ENCODE measurements at regions of chrX and their contacts with region 1.

Region 1: GRCh38 chrX:148530464-148531077 is 30.2 kb downstream of the AFF2 start:
- DNase-seq: no peak
- ATAC-seq: no peak; the same call in 2 of the 3 replicates
- H3K4me3 ChIP-seq: no peak overlapping the region
- H3K27ac ChIP-seq: no peak overlapping the region
- H3K4me1 ChIP-seq: no peaks in the 10 kb centered on the region
- H3K27me3 ChIP-seq: no peaks in the 10 kb centered on the region
- CTCF ChIP-seq: peak; percentile 47 to 74 (median 58); a peak in 5 of 6 replicates
- EP300 ChIP-seq: no peak
- POLR2A ChIP-seq: no peak
- RAD21 ChIP-seq: peak; percentile 43

Region 2: DNA sequence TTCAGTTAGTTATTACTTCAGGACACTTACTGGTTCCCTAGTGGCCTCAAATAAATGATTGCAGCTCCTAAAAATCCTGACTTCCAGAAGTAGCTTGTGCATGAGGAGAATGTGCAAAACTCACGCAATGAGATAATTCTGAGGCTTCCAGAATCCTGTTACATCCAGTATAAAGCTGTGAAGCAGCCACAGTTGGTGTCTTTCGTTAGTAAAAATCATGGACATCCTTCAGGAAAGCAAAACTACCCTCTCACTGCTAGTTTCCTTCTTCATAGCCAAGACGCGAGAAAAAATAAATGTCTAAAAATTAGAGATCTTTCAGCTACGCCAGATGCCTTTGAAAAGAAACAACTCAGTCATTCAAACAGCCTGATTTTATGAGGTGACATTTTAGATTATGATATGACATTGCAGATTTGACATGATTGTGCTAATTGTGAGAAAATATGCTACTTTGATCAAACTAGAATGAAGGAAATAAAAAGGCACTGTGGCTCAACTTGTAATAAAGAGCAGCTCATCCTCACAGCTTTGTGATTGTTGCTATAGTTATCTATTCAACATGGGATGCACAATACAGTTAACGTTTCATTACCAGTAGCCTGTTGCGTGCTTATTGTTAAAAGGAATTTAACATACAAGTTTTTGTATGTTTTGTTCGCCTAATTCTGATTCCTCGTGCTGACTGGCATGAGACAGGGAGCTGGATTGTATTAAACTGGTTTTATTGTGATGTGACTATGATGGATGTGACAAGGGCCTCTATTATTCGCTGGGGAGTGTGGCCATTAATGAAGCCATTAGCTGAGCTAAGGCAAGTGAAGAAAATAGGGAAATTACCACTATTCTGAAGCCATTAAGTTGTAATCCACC is 10.3 kb after region 1 on chrX:
- CTCF ChIA-PET with region 1: interaction called, 21 read pairs
- POLR2A ChIA-PET with region 1: no interaction called
- RAD21 ChIA-PET with region 1: no interaction called
- SMC1A ChIA-PET with region 1: interaction called, 6 read pairs
- in situ Hi-C with region 1: no loop called
- intact Hi-C with region 1: no loop called
- DNase-seq: no peak
- ATAC-seq: no peak
- H3K4me3 ChIP-seq: no peak overlapping the region
- H3K27ac ChIP-seq: no peak overlapping the region
- H3K4me1 ChIP-seq: no peaks in the 10 kb centered on the region
- H3K27me3 ChIP-seq: no peaks in the 10 kb centered on the region; a peak in 1 of 4 replicates
- CTCF ChIP-seq: no peak
- EP300 ChIP-seq: no peak
- POLR2A ChIP-seq: no peak
- RAD21 ChIP-seq: no peak

Region 3: GRCh38 chrX:148755111-148755510 is 224.5 kb after region 1 on chrX:
- CTCF ChIA-PET with region 1: no interaction called
- POLR2A ChIA-PET with region 1: no interaction called
- RAD21 ChIA-PET with region 1: no interaction called
- SMC1A ChIA-PET with region 1: no interaction called
- in situ Hi-C with region 1: no loop called
- intact Hi-C with region 1: no loop called
- DNase-seq: no peak
- ATAC-seq: no peak
- H3K4me3 ChIP-seq: no peak overlapping the region
- H3K27ac ChIP-seq: no peak overlapping the region
- H3K4me1 ChIP-seq: no peaks in the 10 kb centered on the region
- H3K27me3 ChIP-seq: no peaks in the 10 kb centered on the region; a peak in 1 of 4 replicates
- CTCF ChIP-seq: no peak
- EP300 ChIP-seq: no peak
- POLR2A ChIP-seq: no peak
- RAD21 ChIP-seq: no peak